ENCODE measurements at regions of chr2 and their contacts with region 1.

Region 1: DNA sequence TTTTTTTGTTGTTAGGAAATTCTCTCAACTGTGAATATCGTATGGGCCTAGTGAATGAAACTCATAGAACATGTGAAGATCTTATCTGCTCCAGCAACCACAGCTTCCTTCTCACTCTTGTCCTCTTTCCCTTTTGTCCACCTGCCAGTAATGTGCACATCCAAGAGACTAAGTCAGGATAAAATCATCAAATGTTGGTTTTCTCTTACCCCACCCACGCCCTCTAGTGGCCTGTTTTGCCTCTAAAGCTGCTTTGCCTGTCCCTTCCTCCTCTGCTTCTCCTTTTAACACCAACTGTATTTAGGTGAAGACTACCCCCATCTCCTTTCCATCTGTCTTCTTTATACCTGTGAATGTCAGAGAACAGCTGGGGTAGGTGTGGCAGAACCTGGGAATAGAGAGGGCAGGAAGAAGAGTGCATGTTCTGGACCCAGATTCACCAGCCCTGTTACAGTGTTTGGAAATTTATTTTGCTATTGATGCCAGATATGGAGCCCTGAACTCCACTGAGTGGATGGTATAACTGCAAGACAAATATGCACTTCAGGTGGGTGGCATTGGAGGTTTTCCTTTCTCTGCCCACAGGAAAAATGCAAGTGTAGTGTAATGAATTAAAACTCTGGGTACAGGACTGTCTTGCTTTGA is 8.4 kb upstream of the MGAT5 start:
- DNase-seq: peak; percentile 69 to 74
- ATAC-seq: peak in 3 of 4 donors; percentile 27 to 72 (median 52)
- H3K4me3 ChIP-seq: no peak overlapping the region
- H3K27ac ChIP-seq: no peak overlapping the region
- H3K4me1 ChIP-seq: no peaks in the 10 kb centered on the region
- H3K27me3 ChIP-seq: peaks cover 0 to 3% (median 0%) of the 10 kb centered on the region in 3 donors
- CTCF ChIP-seq: peak; percentile 79

Region 2: GRCh38 chr2:133886735-133887660 is 358.5 kb before region 1 on chr2:
- intact Hi-C with region 1: loop called in 1 of 2 experiments (anchors 10 kb)
- DNase-seq: peak; percentile 49 to 67
- ATAC-seq: peak; percentile 53 to 67 (median 58)
- H3K4me3 ChIP-seq: no peak overlapping the region
- H3K27ac ChIP-seq: no peak overlapping the region
- H3K4me1 ChIP-seq: no peaks in the 10 kb centered on the region
- H3K27me3 ChIP-seq: peaks cover 0 to 4% (median 0%) of the 10 kb centered on the region in 3 donors
- CTCF ChIP-seq: peak; percentile 60

Region 3: DNA sequence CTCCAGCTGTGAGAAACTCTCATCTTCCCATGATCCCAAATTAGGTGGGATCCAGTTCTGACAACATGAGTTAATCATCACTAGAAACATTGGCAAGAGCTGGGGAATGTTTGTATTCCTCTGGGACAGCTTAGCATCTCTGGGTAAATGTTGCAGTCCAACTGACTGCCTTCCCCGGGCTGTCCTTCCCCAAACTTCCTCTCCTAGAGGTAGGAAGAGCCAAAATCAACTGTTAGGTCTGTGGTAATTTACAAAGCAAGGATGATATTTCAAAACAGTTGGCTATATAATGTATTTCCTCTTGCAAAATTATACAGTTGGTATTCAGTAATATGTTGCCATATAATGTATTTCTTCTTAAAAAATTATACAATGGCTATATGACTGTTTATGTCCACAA is 156.9 kb after region 1 on chr2:
- intact Hi-C with region 1: loop called in 1 of 2 experiments (anchors 10 kb)
- DNase-seq: peak; percentile 31 to 65
- ATAC-seq: peak in 3 of 4 donors; percentile 63 to 86 (median 69)
- H3K4me3 ChIP-seq: no peak overlapping the region
- H3K27ac ChIP-seq: peak overlapping the region; percentile 10
- H3K4me1 ChIP-seq: peaks cover 5% of the 10 kb centered on the region
- H3K27me3 ChIP-seq: peaks cover 0 to 1% (median 0%) of the 10 kb centered on the region in 3 donors
- CTCF ChIP-seq: no peak

Region 4: GRCh38 chr2:134411828-134412638 is 166.6 kb after region 1 on chr2:
- intact Hi-C with region 1: loop called (anchors 5 to 10 kb)
- DNase-seq: peak; percentile 51 to 69
- ATAC-seq: peak; percentile 89 to 96 (median 92)
- H3K4me3 ChIP-seq: no peak overlapping the region
- H3K27ac ChIP-seq: no peak overlapping the region
- H3K4me1 ChIP-seq: no peaks in the 10 kb centered on the region
- H3K27me3 ChIP-seq: no peaks in the 10 kb centered on the region
- CTCF ChIP-seq: peak; percentile 70

Measured in psoas muscle (tissue), 8 donors.